B cell (primary cell): ENCODE measurements at regions of chr10 and their contacts with region 1.

Region 1: GRCh38 chr10:70815504-70816219 is at the start of gene SGPL1:
- DNase-seq: peak; percentile 89
- ATAC-seq: peak; percentile 94
- H3K4me3 ChIP-seq: peak within 1 kb of the TSS; percentile 61 to 79 (median 68)
- H3K4me3 Mint-ChIP-seq: peak within 1 kb of the TSS; percentile 99
- H3K27ac ChIP-seq: peak within 1 kb of the TSS; percentile 53 to 79
- H3K27ac Mint-ChIP-seq: peak within 1 kb of the TSS; percentile 97
- H3K4me1 ChIP-seq: peaks cover 7 to 17% of the 10 kb centered on the region in 2 donors
- H3K4me1 Mint-ChIP-seq: peaks cover 25% of the 10 kb centered on the region
- H3K27me3 ChIP-seq: no peaks in the 10 kb centered on the region
- H3K27me3 Mint-ChIP-seq: no peaks in the 10 kb centered on the region
- CTCF ChIP-seq: peak; percentile 97
- total RNA-seq, gene SGPL1: 41.9 and 46.2 TPM in 2 replicates

Region 2: DNA sequence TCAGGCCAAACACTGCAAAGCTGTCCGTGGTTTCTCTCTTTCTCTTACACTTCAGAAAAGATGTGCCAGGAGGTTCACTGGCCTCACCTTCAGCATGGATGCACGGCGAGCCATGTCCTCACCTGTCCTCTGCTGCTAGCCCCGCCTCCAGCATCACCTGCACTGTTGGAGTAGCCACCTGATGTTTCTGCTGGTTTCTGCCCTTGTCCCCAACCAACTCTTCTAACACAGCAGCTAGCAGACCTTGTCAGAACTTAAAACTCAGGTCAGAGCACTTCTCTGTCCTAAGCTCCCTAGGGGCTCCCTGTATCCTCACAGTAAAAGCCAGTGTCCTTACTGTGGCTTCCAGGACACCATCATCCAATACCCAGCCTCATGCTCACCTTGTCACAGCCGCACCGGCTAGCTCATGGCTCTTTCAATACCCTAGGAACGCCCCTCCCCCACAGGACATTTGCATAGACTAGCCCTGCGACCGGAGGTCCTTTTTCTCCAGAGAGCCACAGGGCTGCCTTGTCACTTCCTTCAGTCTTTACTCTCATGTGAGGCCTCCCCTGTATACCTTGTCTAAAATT is 321.9 kb before region 1 on chr10:
- CTCF ChIA-PET with region 1: no interaction called
- POLR2A ChIA-PET with region 1: no interaction called
- intact Hi-C with region 1: loop called (anchors 5 kb)
- DNase-seq: peak; percentile 78
- ATAC-seq: peak; percentile 73
- H3K4me3 ChIP-seq: peak overlapping the region in 3 of 5 experiments; percentile 13 to 57 (median 28)
- H3K4me3 Mint-ChIP-seq: peak overlapping the region; percentile 68
- H3K27ac ChIP-seq: peak overlapping the region; percentile 81 to 88
- H3K27ac Mint-ChIP-seq: peak overlapping the region; percentile 89
- H3K4me1 ChIP-seq: peaks cover 65 to 69% of the 10 kb centered on the region in 2 donors
- H3K4me1 Mint-ChIP-seq: peaks cover 76% of the 10 kb centered on the region
- H3K27me3 ChIP-seq: no peaks in the 10 kb centered on the region
- H3K27me3 Mint-ChIP-seq: no peaks in the 10 kb centered on the region
- CTCF ChIP-seq: no peak

Region 3: GRCh38 chr10:70549962-70550458 is 265.7 kb before region 1 on chr10:
- CTCF ChIA-PET with region 1: interaction called, 3 read pairs
- POLR2A ChIA-PET with region 1: no interaction called
- intact Hi-C with region 1: loop called (anchors 10 kb)
- DNase-seq: peak; percentile 76
- ATAC-seq: peak; percentile 70
- H3K4me3 ChIP-seq: no peak overlapping the region
- H3K4me3 Mint-ChIP-seq: no peak overlapping the region
- H3K27ac ChIP-seq: no peak overlapping the region
- H3K27ac Mint-ChIP-seq: no peak overlapping the region
- H3K4me1 ChIP-seq: no peaks in the 10 kb centered on the region
- H3K4me1 Mint-ChIP-seq: no peaks in the 10 kb centered on the region
- H3K27me3 ChIP-seq: no peaks in the 10 kb centered on the region
- H3K27me3 Mint-ChIP-seq: no peaks in the 10 kb centered on the region
- CTCF ChIP-seq: peak; percentile 95

Region 4: DNA sequence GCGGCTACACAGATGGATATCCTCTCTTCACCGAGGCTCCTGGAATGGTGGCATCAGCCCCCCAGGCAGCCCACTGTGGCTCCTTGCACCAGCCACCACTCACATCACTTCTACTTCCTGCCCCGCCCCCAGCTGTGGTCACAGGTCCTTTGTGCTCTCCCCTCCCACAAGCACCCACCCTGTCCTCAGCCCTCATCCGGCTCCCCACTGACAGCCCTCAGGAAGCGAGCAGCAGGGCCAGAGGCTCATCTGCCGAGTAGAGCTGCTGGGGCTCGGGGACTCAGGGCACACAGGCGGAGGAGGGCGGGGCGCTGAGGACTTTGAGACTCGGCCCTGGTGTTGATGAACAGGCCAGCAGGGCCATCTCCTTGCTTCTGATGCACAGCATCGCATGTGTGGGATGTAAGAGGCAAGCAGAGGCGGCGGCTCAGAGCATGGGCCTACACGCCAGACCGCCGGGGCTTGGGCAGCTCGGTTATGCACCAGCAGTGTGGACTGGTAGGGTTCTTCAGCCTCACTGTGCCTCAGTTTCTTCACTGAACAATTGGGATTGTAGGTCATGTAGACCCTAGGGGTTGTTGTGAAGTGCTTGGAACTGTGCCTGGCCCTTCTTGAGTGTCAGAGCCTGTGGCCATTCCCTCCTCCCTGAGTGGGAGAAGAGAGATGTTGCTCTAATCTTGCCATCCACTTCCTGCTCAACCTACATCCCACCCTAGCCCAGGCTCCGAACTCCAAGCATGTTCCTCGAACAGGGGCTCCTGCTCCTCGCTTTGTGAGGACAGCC is 212.8 kb before region 1 on chr10 and contains the start of gene PRF1:
- CTCF ChIA-PET with region 1: no interaction called
- POLR2A ChIA-PET with region 1: no interaction called
- intact Hi-C with region 1: no loop called
- DNase-seq: no peak
- ATAC-seq: no peak
- H3K4me3 ChIP-seq: no peak within 1 kb of the TSS
- H3K4me3 Mint-ChIP-seq: no peak within 1 kb of the TSS
- H3K27ac ChIP-seq: no peak within 1 kb of the TSS
- H3K27ac Mint-ChIP-seq: no peak within 1 kb of the TSS
- H3K4me1 ChIP-seq: no peaks in the 10 kb centered on the region
- H3K4me1 Mint-ChIP-seq: no peaks in the 10 kb centered on the region
- H3K27me3 ChIP-seq: peaks cover 0 to 4% (median 0%) of the 10 kb centered on the region in 4 experiments
- H3K27me3 Mint-ChIP-seq: no peaks in the 10 kb centered on the region
- CTCF ChIP-seq: no peak
- total RNA-seq, gene PRF1: 0.92 and 1.0 TPM in 2 replicates

Region 5: DNA sequence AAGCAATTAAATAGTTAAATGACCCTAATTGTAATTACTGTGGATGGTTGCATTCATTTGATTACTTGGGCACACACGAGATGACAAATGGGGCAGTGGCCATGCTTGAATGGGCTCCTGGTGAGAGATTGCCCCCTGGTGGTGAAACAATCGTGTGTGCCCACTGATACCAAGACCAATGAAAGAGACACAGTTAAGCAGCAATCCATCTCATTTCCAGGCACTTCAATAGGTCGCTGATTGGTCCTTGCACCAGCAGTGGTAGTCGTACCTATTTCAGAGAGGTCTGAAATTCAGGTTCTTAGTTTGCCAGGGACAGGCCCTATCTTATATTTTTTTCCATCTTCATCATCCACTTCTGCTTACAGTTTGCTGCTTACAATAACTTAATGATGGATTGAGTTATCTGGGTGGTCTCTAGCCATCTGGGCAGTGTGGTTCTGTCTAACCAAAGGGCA is 64.4 kb after region 1 on chr10:
- CTCF ChIA-PET with region 1: interaction called, 8 read pairs
- POLR2A ChIA-PET with region 1: no interaction called
- intact Hi-C with region 1: loop called (anchors 1 kb)
- DNase-seq: peak; percentile 82
- ATAC-seq: peak; percentile 92
- H3K4me3 ChIP-seq: no peak overlapping the region
- H3K4me3 Mint-ChIP-seq: no peak overlapping the region
- H3K27ac ChIP-seq: no peak overlapping the region
- H3K27ac Mint-ChIP-seq: no peak overlapping the region
- H3K4me1 ChIP-seq: no peaks in the 10 kb centered on the region
- H3K4me1 Mint-ChIP-seq: peaks cover 6% of the 10 kb centered on the region
- H3K27me3 ChIP-seq: no peaks in the 10 kb centered on the region
- H3K27me3 Mint-ChIP-seq: no peaks in the 10 kb centered on the region
- CTCF ChIP-seq: peak; percentile 88

Region 6: GRCh38 chr10:70887804-70888800 is 72.4 kb after region 1 on chr10 and contains the start of gene PCBD1:
- CTCF ChIA-PET with region 1: interaction called, 7 read pairs
- POLR2A ChIA-PET with region 1: no interaction called
- intact Hi-C with region 1: loop called (anchors 2 kb)
- DNase-seq: peak; percentile 78
- ATAC-seq: peak; percentile 93
- H3K4me3 ChIP-seq: peak within 1 kb of the TSS; percentile 26 to 88 (median 76)
- H3K4me3 Mint-ChIP-seq: peak within 1 kb of the TSS; percentile 87
- H3K27ac ChIP-seq: peak within 1 kb of the TSS; percentile 63 to 84
- H3K27ac Mint-ChIP-seq: peak within 1 kb of the TSS; percentile 89
- H3K4me1 ChIP-seq: peaks cover 5 to 11% of the 10 kb centered on the region in 2 donors
- H3K4me1 Mint-ChIP-seq: peaks cover 5% of the 10 kb centered on the region
- H3K27me3 ChIP-seq: no peaks in the 10 kb centered on the region
- H3K27me3 Mint-ChIP-seq: no peaks in the 10 kb centered on the region
- CTCF ChIP-seq: no peak
- total RNA-seq, gene PCBD1: 13.3 and 14.1 TPM in 2 replicates